Common myeloid progenitor, CD34-positive (primary cell): ENCODE measurements at regions of chr6 and their contacts with region 1.

Region 1: GRCh38 chr6:12289933-12290820 is at the start of gene EDN1:
- DNase-seq: peak; percentile 80 to 95 (median 91)
- H3K4me3 ChIP-seq: peak within 1 kb of the TSS; percentile 13 to 85 (median 68)
- H3K27ac ChIP-seq: no peak within 1 kb of the TSS
- H3K4me1 ChIP-seq: peaks cover 10 to 43% (median 15%) of the 10 kb centered on the region in 4 experiments
- H3K27me3 ChIP-seq: peaks cover 0 to 7% (median 4%) of the 10 kb centered on the region in 5 experiments

Region 2: DNA sequence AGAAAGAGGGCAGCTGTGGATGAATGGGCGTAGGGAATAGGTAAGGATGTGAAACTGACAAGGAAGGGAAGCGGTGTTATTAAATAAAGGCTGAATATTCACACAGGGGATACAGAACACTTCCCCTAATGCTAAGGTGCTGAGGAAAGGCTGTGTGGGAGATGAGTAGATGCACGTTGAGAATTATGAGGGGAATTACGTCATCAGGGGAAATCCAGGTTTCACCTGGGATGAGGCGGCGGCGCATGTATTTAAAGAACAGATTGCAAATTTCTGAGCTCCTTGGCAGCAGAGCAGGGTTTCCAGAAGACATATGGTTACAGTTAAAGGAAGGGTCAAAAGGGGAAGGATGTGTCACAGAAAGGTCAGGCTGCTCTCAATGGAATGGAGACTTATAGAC is 28.7 kb before region 1 on chr6:
- CTCF ChIA-PET with region 1: no interaction called
- POLR2A ChIA-PET with region 1: no interaction called
- DNase-seq: no peak
- H3K4me3 ChIP-seq: no peak overlapping the region
- H3K27ac ChIP-seq: no peak overlapping the region
- H3K4me1 ChIP-seq: peaks cover 1 to 7% (median 4%) of the 10 kb centered on the region in 4 experiments
- H3K27me3 ChIP-seq: no peaks in the 10 kb centered on the region

Region 3: DNA sequence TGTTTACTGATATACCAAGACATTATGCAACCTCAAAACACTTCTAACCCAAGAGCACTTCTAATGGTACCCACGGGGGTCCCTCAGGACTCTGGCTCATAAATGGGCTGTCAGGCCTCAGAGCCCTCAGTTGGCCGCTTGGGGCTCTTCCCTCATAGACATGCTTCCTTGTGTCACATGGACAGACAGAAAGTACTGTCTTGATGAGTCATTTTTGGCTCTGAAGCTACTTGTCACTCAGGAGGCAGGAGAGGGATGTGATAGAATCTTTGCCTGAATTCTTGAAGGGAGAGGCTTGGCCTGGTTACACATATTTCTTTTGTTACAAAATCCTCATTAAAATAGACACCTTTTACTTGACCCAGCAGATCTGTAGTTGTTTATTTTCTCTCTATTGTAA is 15.1 kb before region 1 on chr6:
- CTCF ChIA-PET with region 1: interaction called, 65 read pairs
- POLR2A ChIA-PET with region 1: no interaction called
- DNase-seq: no peak
- H3K4me3 ChIP-seq: no peak overlapping the region
- H3K27ac ChIP-seq: no peak overlapping the region
- H3K4me1 ChIP-seq: peaks cover 0 to 8% (median 2%) of the 10 kb centered on the region in 4 experiments
- H3K27me3 ChIP-seq: no peaks in the 10 kb centered on the region

Region 4: GRCh38 chr6:12331956-12332749 is 42.0 kb after region 1 on chr6:
- CTCF ChIA-PET with region 1: no interaction called
- POLR2A ChIA-PET with region 1: no interaction called
- DNase-seq: peak; percentile 18 to 49 (median 36)
- H3K4me3 ChIP-seq: peak overlapping the region in 1 of 7 experiments; percentile 5
- H3K27ac ChIP-seq: no peak overlapping the region
- H3K4me1 ChIP-seq: peaks cover 6 to 16% (median 10%) of the 10 kb centered on the region in 4 experiments
- H3K27me3 ChIP-seq: no peaks in the 10 kb centered on the region

Region 5: GRCh38 chr6:12605888-12606345 is 315.7 kb after region 1 on chr6:
- CTCF ChIA-PET with region 1: interaction called, 13 read pairs
- POLR2A ChIA-PET with region 1: interaction called, 3 read pairs
- DNase-seq: peak; percentile 68 to 88 (median 86)
- H3K4me3 ChIP-seq: peak overlapping the region in 1 of 7 experiments; percentile 53
- H3K27ac ChIP-seq: no peak overlapping the region
- H3K4me1 ChIP-seq: peaks cover 0 to 9% (median 5%) of the 10 kb centered on the region in 4 experiments
- H3K27me3 ChIP-seq: no peaks in the 10 kb centered on the region

Region 6: DNA sequence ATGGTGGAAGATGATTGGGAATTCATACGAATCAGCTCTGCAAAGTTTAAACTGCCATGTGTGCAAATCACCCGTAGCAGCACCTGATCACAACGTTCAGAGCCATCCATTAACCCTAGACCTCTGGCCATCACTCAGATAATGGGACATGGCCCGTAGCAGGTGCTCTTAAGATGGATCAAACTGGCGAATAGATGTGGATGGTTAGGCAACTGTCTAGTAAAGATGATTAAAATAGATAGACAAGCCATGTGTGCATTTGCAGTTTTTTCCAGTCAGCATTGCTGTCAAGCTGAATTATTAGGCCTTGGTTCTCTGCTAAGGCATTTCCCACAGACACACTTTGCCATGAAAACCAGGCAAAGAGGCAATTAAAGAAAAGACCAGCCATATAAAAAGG is 385.8 kb after region 1 on chr6:
- CTCF ChIA-PET with region 1: no interaction called
- POLR2A ChIA-PET with region 1: no interaction called
- DNase-seq: no peak
- H3K4me3 ChIP-seq: no peak overlapping the region
- H3K27ac ChIP-seq: no peak overlapping the region
- H3K4me1 ChIP-seq: peaks cover 0 to 5% (median 0%) of the 10 kb centered on the region in 4 experiments
- H3K27me3 ChIP-seq: no peaks in the 10 kb centered on the region